HAP-1 (cell line): ENCODE measurements at regions of chr18 and their contacts with region 1.

Region 1: GRCh38 chr18:3995476-3996102 is 459.5 kb downstream of the DLGAP1 start:
- DNase-seq: peak; percentile 36 to 74
- H3K4me3 ChIP-seq: no peak overlapping the region
- H3K4me1 ChIP-seq: peaks cover 9% of the 10 kb centered on the region
- H3K27me3 ChIP-seq: no peaks in the 10 kb centered on the region

Region 2: GRCh38 chr18:3297025-3297984 is 698.3 kb before region 1 on chr18:
- in situ Hi-C with region 1: loop called (anchors 25 kb)
- DNase-seq: peak; percentile 92 to 97
- H3K4me3 ChIP-seq: peak overlapping the region; percentile 69
- H3K4me1 ChIP-seq: peaks cover 2% of the 10 kb centered on the region
- H3K27me3 ChIP-seq: peaks cover 6% of the 10 kb centered on the region; the same call in 1 of the 2 replicates

Region 3: GRCh38 chr18:3821524-3821923 is 174.1 kb before region 1 on chr18:
- in situ Hi-C with region 1: no loop called
- DNase-seq: no peak
- H3K4me3 ChIP-seq: no peak overlapping the region
- H3K4me1 ChIP-seq: no peaks in the 10 kb centered on the region
- H3K27me3 ChIP-seq: no peaks in the 10 kb centered on the region